Heart right ventricle (tissue), 16 donors: ENCODE measurements at regions of chr5 and their contacts with region 1.

Region 1: GRCh38 chr5:177497292-177498033 is at the start of gene PDLIM7:
- DNase-seq: peak; percentile 95 to 96
- ATAC-seq: peak; percentile 81 to 90 (median 88)
- H3K4me3 ChIP-seq: peak within 1 kb of the TSS; percentile 57 to 93 (median 90)
- H3K27ac ChIP-seq: peak within 1 kb of the TSS; percentile 81 to 98 (median 94)
- H3K4me1 ChIP-seq: peaks cover 15 to 76% (median 63%) of the 10 kb centered on the region in 9 donors
- H3K27me3 ChIP-seq: no peaks in the 10 kb centered on the region
- CTCF ChIP-seq: peak in 3 of 9 donors; percentile 9 to 42 (median 36)
- total RNA-seq, gene PDLIM7: 32.5 to 70.6 (median 51.0) TPM

Region 2: DNA sequence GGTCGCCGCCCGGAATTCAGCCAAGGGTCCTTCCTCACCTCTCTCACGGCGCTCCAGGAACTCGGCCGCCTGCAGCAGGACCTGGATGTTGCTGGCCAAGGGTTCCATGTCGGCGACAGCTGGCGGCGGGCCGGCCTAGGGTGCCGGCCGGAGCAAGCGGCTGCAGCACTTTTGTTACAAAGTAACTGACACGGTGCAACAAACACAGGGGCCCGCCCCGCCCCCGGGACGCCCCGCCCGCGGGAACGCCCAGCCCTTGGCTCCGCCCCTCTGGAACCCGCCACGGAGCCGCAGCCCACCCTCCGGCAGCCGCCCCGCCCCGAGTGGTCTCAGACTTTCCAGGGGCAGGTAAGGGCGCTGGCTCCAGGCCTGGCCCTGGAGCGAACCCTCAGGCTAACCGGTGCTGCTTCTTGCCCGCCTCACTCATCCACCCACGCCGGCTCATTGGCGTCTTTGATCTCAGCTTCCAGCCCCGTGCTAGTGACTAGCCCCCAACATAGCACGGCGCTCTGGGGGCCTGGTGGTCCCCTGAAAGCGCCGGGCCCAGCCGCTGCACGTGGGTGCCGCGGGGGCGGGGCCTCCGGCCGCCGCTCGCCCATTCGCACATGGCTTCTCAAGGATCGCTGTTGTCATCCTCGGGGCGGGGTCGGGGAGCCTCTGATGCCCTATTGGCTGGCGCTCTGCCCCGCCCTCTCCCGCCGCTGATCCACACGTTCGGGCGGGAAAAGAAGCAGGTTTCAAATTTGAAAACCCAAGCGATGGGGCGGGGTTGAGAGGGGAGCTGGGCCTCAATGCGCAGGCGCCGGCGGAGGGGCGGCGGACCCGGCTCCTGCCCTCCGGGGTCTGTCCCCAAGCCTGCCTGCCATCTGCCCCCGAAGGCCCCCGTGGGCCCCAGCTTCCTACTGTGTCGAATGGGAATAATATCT is 185.5 kb before region 1 on chr5 and contains the start of gene MXD3:
- intact Hi-C with region 1: loop called in 4 of 10 experiments (anchors 5 to 10 kb)
- DNase-seq: peak; percentile 95 to 97
- ATAC-seq: peak; percentile 85 to 96 (median 92)
- H3K4me3 ChIP-seq: peak within 1 kb of the TSS; percentile 34 to 70 (median 58)
- H3K27ac ChIP-seq: peak within 1 kb of the TSS in 1 of 10 donors; percentile 97
- H3K4me1 ChIP-seq: peaks cover 14 to 63% (median 28%) of the 10 kb centered on the region in 9 donors
- H3K27me3 ChIP-seq: no peaks in the 10 kb centered on the region
- CTCF ChIP-seq: no peak
- total RNA-seq, gene MXD3: 1.2 to 6.4 (median 2.4) TPM

Region 3: DNA sequence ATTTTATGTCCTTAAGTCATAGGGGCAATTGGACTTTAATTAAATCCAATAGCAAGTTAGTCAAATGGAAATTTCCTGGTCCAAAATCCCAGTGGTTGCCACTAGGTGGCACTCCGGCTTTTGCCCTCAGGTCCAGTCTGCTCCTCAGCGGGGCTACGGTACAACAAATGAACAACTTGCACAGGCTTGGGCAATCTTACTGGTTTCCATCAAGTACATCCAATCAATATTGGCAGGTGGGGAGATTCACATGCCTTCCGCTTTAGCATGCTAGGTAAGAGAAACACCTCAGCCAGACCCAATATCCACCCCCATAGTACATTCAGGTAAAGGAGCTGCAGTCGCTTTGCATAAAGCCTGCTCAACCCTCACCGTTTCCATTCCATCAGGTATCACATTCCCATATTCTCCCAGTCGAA is 179.5 kb before region 1 on chr5:
- intact Hi-C with region 1: loop called in 4 of 10 experiments (anchors 5 to 10 kb)
- DNase-seq: peak in 1 of 2 donors; percentile 70
- ATAC-seq: peak in 7 of 8 donors; percentile 45 to 67 (median 57)
- H3K4me3 ChIP-seq: no peak overlapping the region
- H3K27ac ChIP-seq: no peak overlapping the region
- H3K4me1 ChIP-seq: peaks cover 0 to 14% (median under 1%) of the 10 kb centered on the region in 9 donors
- H3K27me3 ChIP-seq: no peaks in the 10 kb centered on the region
- CTCF ChIP-seq: peak; percentile 72 to 91 (median 85)

Region 4: DNA sequence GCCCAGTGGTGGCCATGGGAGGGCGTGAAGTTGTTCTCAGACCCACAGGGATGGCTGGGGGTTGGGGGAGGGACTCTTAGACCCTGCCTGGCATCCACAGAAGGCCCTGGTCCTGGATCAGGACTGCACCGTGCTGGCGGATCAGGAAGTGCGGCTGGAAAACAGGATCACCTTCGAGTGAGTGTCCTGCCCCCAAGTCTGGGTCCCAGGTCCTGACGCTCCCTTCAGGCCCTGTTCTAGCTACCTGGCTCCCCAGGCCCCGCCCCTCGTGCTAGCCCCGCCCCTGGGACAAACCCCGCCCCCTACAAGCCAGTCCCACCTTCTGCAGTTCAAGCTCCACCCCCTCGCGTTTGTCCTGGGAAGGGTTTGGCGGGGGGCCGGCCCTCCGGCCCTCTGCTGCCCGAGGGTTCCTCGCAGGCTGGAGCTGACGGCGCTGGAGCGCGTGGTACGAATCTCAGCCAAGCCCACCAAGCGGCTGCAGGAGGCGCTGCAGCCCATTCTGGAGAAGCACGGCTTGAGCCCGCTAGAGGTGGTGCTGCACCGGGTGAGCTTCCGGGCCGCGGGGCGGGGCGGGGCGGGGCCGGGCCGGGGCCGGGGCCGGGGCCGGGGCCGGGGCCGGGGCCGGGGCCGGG is 126.9 kb before region 1 on chr5:
- intact Hi-C with region 1: no loop called
- DNase-seq: peak; percentile 66 to 72
- ATAC-seq: peak; percentile 42 to 65 (median 58)
- H3K4me3 ChIP-seq: peak overlapping the region in 9 of 10 donors; percentile 14 to 58 (median 41)
- H3K27ac ChIP-seq: peak overlapping the region in 2 of 10 donors; percentile 31 to 75
- H3K4me1 ChIP-seq: peaks cover 3 to 59% (median 18%) of the 10 kb centered on the region in 9 donors
- H3K27me3 ChIP-seq: no peaks in the 10 kb centered on the region
- CTCF ChIP-seq: peak in 8 of 9 donors; percentile 11 to 60 (median 44)

Region 5: GRCh38 chr5:177390363-177391300 is 106.8 kb before region 1 on chr5:
- intact Hi-C with region 1: loop called (anchors 1 to 5 kb)
- DNase-seq: peak; percentile 69 to 82
- ATAC-seq: peak; percentile 75 to 94 (median 86)
- H3K4me3 ChIP-seq: no peak overlapping the region
- H3K27ac ChIP-seq: peak overlapping the region in 1 of 10 donors; percentile 61
- H3K4me1 ChIP-seq: peaks cover 0 to 30% (median 0%) of the 10 kb centered on the region in 9 donors
- H3K27me3 ChIP-seq: peaks cover 0 to 40% (median 11%) of the 10 kb centered on the region in 7 donors
- CTCF ChIP-seq: peak; percentile 91 to 99 (median 99)

Region 6: DNA sequence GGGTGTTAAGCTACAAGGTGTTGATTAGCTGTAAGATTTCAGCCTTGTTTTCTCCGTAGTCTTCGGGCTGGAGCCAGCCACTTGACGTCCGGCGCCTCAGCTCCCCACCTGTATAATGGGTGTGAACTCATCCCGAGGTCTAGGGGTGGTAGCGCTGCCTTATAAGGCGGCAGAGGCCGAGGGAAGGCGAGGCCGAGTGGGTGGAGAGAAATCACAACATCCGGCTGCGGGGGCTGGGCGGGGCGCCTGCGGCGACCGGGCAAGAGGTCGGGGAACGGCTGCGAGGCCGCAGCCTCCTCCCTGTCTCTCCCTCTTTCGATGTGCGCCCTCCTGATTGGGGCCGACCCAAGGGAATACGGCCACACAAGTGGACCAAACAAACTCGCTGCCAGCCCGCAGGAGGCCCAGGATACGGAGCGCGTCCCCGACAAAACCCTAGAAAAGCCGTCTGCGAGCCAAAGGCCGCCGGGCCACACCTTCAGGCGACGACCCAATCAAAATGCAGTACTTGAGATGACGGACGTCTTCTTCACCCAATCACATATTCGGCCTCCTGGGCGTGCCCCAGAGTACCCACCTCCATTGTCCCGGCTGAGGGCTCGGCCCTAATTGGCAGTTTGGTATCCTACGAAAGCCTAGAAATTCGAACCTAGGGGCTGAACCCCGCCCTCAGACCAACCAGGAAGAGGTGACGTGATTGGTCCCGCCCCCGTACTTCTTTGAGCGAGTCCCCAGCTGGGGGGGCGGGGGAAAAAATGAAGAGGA is 71.5 kb before region 1 on chr5:
- intact Hi-C with region 1: loop called in 1 of 10 experiments (anchors 2 kb)
- DNase-seq: peak; percentile 98 to 100
- ATAC-seq: peak; percentile 96 to 98 (median 97)
- H3K4me3 ChIP-seq: peak overlapping the region; percentile 16 to 94 (median 58)
- H3K27ac ChIP-seq: peak overlapping the region; percentile 85 to 96 (median 92)
- H3K4me1 ChIP-seq: peaks cover 16 to 52% (median 27%) of the 10 kb centered on the region in 9 donors
- H3K27me3 ChIP-seq: no peaks in the 10 kb centered on the region
- CTCF ChIP-seq: no peak